OCI-LY7 (cell line): ENCODE measurements at regions of chr10 and their contacts with region 1.

Region 1: DNA sequence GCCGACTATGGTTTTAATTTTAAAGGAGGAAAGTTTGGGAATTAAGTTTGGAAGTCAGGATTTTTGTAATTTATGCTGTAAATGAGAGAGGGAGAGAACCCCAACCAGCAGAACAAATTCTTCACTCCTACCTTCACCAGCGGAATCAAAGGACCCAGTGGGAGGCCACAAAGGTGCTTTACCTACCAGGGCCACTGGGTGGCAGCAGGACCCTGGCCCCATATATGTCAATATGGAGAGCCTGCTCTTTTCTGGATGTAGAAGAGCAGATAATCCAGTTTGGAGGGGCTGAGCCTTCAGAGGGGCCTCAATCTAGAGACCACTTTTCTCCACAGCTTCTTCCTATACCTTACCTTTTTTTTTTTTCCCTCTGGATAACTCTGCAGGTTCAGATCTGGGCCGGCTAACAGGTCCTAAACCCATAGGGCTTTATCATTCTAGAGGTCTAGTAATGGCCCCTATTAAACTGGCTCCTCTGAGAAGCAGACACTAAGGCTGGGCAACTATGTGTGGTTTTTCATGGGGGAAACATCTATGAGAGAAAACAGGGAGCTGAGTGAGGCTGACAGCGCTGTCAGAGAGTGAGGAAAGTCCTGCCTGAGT is 8.5 kb upstream of the SCD start:
- DNase-seq: peak; percentile 81
- H3K4me3 ChIP-seq: peak overlapping the region; percentile 24
- H3K27ac ChIP-seq: peak overlapping the region; percentile 59
- H3K4me1 ChIP-seq: peaks cover 23% of the 10 kb centered on the region
- CTCF ChIP-seq: peak; percentile 95

Region 2: GRCh38 chr10:99731306-99732032 is 607.1 kb before region 1 on chr10:
- CTCF ChIA-PET with region 1: no interaction called
- POLR2A ChIA-PET with region 1: no interaction called
- intact Hi-C with region 1: no loop called
- DNase-seq: no peak
- H3K4me3 ChIP-seq: peak overlapping the region; percentile 78
- H3K27ac ChIP-seq: peak overlapping the region; percentile 74
- H3K4me1 ChIP-seq: peaks cover 18% of the 10 kb centered on the region
- CTCF ChIP-seq: no peak

Region 3: DNA sequence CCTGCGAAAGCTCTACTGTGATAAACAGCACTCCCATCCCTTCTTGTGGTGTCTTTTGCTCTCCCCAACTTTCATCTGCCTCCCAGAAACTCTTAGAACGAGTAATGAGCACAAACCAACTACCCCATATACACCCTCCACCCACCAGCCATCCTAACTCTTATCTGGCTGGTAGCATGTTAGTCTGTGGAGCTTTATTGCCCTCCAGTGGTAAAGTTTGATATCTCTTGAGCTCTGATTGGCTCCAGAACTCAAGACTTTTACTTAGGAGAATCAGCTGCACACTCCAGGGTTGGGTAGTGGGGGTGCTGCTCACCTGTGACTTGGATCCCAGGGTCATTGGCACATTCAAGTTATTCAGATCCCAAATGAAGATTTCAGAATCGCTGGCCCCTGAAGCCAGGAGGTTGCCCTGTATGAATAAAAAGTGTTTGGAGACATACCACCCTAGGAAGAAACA is 170.2 kb after region 1 on chr10:
- CTCF ChIA-PET with region 1: no interaction called
- POLR2A ChIA-PET with region 1: no interaction called
- intact Hi-C with region 1: loop called (anchors 1 kb)
- DNase-seq: peak; percentile 70
- H3K4me3 ChIP-seq: no peak overlapping the region
- H3K27ac ChIP-seq: no peak overlapping the region
- H3K4me1 ChIP-seq: peaks cover 18% of the 10 kb centered on the region
- CTCF ChIP-seq: peak; percentile 83